Activated naive CD4-positive, alpha-beta T cell treated with anti-CD3 and anti-CD28 coated beads for 36 hours (primary cell): ENCODE measurements at regions of chrX and their contacts with region 1.

Region 1: GRCh38 chrX:102515975-102516941 is at the start of gene TMSB15A:
- DNase-seq: peak; percentile 65
- H3K4me3 Mint-ChIP-seq: peak within 1 kb of the TSS; percentile 78
- H3K27ac Mint-ChIP-seq: no peak within 1 kb of the TSS
- H3K4me1 Mint-ChIP-seq: peaks cover 3% of the 10 kb centered on the region
- H3K27me3 Mint-ChIP-seq: peaks cover 33% of the 10 kb centered on the region
- total RNA-seq, gene TMSB15A: 1.5 to 2.1 TPM

Region 2: DNA sequence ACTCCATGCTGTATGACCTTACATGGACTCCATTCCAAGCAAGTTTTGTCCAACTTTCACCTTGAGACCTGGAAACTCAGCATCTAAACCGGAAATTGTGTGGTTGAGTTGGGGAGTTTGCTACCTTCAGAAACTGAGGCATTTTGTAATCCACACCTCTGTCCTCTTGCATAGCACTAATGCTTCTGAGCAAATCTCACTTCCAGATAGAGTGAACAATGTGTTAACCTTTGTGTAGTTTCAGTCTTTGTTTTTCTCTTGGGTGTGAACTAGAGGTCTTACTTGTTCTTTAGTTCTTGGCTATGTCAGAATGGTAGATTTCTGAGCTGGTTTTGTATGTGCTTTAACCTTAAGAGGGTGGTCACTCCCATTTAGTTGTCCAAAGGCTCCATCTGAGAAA is 438.8 kb before region 1 on chrX:
- CTCF ChIA-PET with region 1: no interaction called
- intact Hi-C with region 1: loop called (anchors 10 kb)
- DNase-seq: no peak
- H3K4me3 Mint-ChIP-seq: no peak overlapping the region
- H3K27ac Mint-ChIP-seq: no peak overlapping the region
- H3K4me1 Mint-ChIP-seq: peaks cover 2% of the 10 kb centered on the region
- H3K27me3 Mint-ChIP-seq: no peaks in the 10 kb centered on the region

Region 3: GRCh38 chrX:102652031-102652688 is 135.9 kb after region 1 on chrX:
- CTCF ChIA-PET with region 1: no interaction called
- intact Hi-C with region 1: loop called (anchors 5 kb)
- DNase-seq: peak; percentile 70
- H3K4me3 Mint-ChIP-seq: peak overlapping the region; percentile 86
- H3K27ac Mint-ChIP-seq: peak overlapping the region; percentile 81
- H3K4me1 Mint-ChIP-seq: peaks cover 21% of the 10 kb centered on the region
- H3K27me3 Mint-ChIP-seq: no peaks in the 10 kb centered on the region

Region 4: GRCh38 chrX:102835504-102836146 is 319.4 kb after region 1 on chrX:
- CTCF ChIA-PET with region 1: no interaction called
- intact Hi-C with region 1: loop called (anchors 5 kb)
- DNase-seq: peak; percentile 16
- H3K4me3 Mint-ChIP-seq: no peak overlapping the region
- H3K27ac Mint-ChIP-seq: no peak overlapping the region
- H3K4me1 Mint-ChIP-seq: no peaks in the 10 kb centered on the region
- H3K27me3 Mint-ChIP-seq: no peaks in the 10 kb centered on the region

Region 5: DNA sequence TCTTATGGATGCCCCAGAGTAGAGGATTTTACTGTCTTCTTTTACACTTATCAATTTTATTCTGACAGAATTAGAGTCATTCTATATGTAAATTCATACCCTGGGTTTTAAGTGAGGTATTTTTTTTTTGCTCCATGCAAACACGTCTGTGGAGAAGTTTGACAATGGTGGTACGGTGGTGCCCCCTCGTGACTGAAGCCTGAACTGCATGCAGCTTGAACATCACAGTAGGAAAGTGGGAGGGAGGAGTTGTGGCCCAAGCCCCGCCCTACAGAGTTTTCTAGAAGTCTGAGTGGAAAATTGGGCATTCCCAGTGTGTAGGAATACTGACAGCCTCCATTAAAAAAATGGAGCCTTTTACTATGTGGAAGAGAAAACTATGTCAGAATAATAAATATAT is 347.5 kb after region 1 on chrX:
- CTCF ChIA-PET with region 1: no interaction called
- intact Hi-C with region 1: loop called (anchors 2 kb)
- DNase-seq: peak; percentile 90
- H3K4me3 Mint-ChIP-seq: no peak overlapping the region
- H3K27ac Mint-ChIP-seq: no peak overlapping the region
- H3K4me1 Mint-ChIP-seq: no peaks in the 10 kb centered on the region
- H3K27me3 Mint-ChIP-seq: no peaks in the 10 kb centered on the region

Region 6: DNA sequence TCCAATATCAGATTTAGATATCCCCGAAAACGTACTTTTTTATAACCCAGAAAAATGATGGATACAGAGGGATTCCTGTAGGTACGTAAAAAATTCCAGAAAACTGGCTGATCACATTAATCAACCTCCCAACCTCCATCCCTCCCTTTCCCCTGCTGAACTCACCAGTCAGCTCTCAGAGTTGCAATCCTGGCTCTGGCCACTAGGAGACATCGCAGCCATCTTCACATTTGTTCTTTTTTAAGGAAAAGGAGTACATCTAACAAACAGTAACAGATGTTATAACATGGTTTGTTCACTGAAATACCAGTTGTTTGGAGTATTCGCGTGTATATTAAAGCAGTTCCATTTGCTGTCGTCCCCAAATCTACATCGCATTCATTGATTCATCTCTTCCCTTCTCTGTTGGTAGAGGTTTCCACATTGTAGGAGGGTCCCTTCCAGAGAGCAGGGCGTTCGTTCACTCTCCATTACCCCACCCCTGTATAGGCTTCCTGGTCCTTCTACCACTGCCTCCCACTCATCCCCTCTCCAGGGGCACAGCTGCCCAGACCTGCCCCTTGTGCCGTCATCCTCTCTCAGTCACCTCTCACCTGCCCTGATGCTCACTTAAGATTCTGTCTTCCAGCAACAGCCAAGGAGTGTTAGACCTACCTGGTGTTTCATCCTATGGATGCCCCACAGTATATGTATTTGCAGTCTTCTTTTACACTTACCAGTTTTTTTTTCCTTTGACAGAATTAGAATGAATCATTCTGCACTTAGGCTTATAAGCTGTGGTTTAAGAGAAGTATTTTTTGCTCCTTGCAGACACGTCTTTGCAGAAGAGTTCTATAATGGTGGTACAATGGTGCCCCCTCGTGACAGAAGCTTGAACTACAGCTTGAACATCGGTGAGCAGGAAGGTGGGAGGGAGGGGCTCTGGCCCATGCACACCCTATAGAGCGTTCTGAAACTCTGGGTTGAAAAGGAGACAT is 384.0 kb after region 1 on chrX:
- CTCF ChIA-PET with region 1: no interaction called
- intact Hi-C with region 1: loop called (anchors 5 kb)
- DNase-seq: peak; percentile 84
- H3K4me3 Mint-ChIP-seq: no peak overlapping the region
- H3K27ac Mint-ChIP-seq: no peak overlapping the region
- H3K4me1 Mint-ChIP-seq: peaks cover 6% of the 10 kb centered on the region
- H3K27me3 Mint-ChIP-seq: no peaks in the 10 kb centered on the region

Region 7: DNA sequence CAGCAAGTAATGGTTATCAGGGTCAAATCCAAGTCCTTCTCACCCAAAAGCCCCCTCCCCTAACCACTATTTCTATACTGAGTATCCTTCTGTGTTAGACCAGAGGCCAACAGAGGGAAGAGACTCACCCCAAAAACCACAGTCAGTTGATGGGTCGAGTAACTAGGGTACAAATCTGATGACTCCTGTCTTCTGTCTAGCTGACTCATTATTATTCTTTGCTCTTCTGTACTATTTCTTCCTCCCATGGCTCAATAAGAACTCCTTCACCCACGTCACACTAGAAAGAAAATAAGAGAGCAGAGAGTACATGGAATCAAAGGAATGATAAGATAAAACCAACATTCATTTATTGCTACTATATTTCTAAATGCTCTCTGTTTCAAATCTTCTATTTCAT is 1001.0 kb after region 1 on chrX:
- CTCF ChIA-PET with region 1: no interaction called
- intact Hi-C with region 1: no loop called
- DNase-seq: no peak
- H3K4me3 Mint-ChIP-seq: no peak overlapping the region
- H3K27ac Mint-ChIP-seq: no peak overlapping the region
- H3K4me1 Mint-ChIP-seq: no peaks in the 10 kb centered on the region
- H3K27me3 Mint-ChIP-seq: no peaks in the 10 kb centered on the region